Mammary epithelial cell (primary cell): ENCODE measurements at regions of chr13 and their contacts with region 1.

Region 1: GRCh38 chr13:47708386-47708785 is 292.7 kb downstream of the SUCLA2 start:
- DNase-seq: peak; percentile 70
- H3K4me3 ChIP-seq: no peak overlapping the region
- H3K27ac ChIP-seq: no peak overlapping the region
- H3K4me1 ChIP-seq: no peaks in the 10 kb centered on the region
- H3K27me3 ChIP-seq: peaks cover 9% of the 10 kb centered on the region
- CTCF ChIP-seq: no peak

Region 2: GRCh38 chr13:47757466-47758080 is 49.2 kb after region 1 on chr13:
- CTCF ChIA-PET with region 1: no interaction called
- dilution Hi-C with region 1: loop called (anchors 10 kb)
- in situ Hi-C with region 1: no loop called
- intact Hi-C with region 1: no loop called
- DNase-seq: no peak
- H3K4me3 ChIP-seq: no peak overlapping the region
- H3K27ac ChIP-seq: no peak overlapping the region
- H3K4me1 ChIP-seq: no peaks in the 10 kb centered on the region
- H3K27me3 ChIP-seq: peaks cover 2% of the 10 kb centered on the region
- CTCF ChIP-seq: no peak